Sciatic nerve (tissue), 2 donors: ENCODE measurements at regions of chr3 and their contacts with region 1.

Region 1: GRCh38 chr3:186760141-186760813 is 23.1 kb upstream of the EIF4A2 start:
- DNase-seq: no peak
- ATAC-seq: no peak

Region 2: GRCh38 chr3:186831798-186832197 is 71.5 kb after region 1 on chr3:
- intact Hi-C with region 1: loop called (anchors 2 kb)
- DNase-seq: no peak
- ATAC-seq: no peak